Motor neuron (in vitro differentiated cells): ENCODE measurements at regions of chr15 and their contacts with region 1.

Region 1: GRCh38 chr15:98658831-98659699 is 10.7 kb downstream of the IGF1R start:
- ATAC-seq: peak; percentile 70 to 90 (median 79)
- H3K4me3 ChIP-seq: no peak overlapping the region
- H3K27ac ChIP-seq: no peak overlapping the region
- H3K4me1 ChIP-seq: peaks cover 5 to 17% of the 10 kb centered on the region in 2 donors

Region 2: DNA sequence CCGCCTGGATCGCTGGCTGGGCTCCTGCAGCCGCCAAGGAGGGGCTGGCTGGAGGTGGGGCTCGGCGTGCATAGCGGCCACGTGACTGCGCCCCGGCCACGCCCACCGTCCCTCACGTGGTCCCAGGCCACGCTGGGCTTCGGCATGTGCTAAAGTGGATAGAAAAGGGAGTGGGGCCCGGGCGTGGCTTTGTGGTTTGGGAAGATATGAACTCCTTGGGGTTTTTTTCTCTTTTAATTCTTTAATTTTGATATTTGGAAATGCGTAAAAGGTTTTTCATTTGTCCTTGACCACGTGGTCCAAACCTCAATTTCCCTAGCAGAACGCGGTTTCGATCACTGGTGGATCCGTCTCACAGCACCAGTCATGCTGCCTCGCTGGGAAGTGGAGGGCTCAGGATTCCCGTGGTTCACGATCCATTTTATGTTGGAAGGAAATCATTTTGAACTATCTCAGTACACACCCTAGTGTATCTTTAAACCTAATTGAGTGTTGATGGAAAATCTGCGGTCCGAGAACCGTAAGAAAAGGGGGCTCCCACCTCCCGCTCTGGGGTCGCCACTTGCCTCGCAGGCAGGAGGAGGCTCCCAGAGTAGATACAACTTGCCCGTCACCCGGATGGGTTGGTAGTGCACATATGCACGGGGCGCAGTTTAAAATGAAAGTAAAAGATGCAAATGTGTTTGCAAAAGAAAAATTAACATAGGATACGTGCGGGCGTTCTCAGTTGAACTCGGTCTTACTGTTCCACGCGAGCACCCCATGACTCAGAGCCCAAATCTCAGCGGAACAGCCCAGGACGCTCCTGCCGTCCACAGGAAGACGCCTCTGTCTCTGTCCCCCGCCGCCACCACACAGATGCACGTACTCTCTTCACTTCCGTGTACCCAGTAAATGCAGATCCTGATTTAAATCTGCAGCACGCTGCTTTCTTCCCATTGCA is 206.6 kb after region 1 on chr15:
- in situ Hi-C with region 1: loop called in 1 of 9 experiments (anchors 10 kb)
- ATAC-seq: peak; percentile 48 to 93 (median 86)
- H3K4me3 ChIP-seq: peak overlapping the region; percentile 32 to 43 (median 32)
- H3K27ac ChIP-seq: peak overlapping the region; percentile 79 to 91
- H3K4me1 ChIP-seq: peaks cover 3 to 10% of the 10 kb centered on the region in 2 donors